Right ventricle myocardium inferior (tissue), 1 donor: ENCODE measurements at regions of chr15 and their contacts with region 1.

Region 1: DNA sequence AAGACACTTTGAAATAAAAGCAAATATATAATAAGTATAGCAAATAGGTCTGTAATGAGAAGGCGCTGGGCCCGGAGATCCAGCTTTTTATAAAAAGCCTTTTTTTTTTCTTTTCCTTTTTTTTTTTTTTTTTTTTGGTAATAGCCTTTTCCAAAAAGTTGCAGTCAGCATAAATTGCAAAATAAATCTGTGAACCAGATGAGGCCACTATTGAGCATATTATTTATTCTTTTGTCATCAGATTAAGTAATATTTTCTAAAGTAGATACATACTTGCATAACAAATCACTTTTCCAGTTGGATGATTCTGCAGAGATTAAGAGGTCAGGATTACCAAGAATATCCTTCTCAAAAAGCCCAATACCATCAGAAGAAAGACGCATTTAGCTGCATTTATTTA is 24.9 kb downstream of the FMN1 start:
- DNase-seq: no peak
- ATAC-seq: no peak

Region 2: DNA sequence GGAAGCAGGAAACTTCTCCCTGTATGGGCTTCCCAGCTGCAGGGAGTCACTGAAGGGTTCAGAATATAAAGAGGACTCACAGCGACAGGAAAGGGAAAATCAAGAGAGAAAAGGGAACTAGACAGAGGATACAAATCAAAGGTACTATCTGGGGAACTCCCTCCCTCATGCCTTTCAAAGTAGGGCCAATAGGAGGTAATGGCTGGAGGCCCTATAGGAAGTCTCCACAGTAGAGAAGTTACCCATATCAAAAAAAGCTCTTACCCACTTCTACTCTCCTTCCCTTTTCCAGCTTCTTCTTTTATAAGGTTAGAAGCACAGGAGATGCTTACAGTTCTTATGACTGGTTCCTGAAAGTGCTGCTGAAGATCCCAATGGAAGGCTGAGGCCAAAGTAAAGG is 18.6 kb before region 1 on chr15:
- intact Hi-C with region 1: loop called (anchors 2 kb)
- DNase-seq: no peak
- ATAC-seq: no peak